Heart left ventricle (tissue), 16 donors: ENCODE measurements at regions of chr2 and their contacts with region 1.

Region 1: GRCh38 chr2:171160119-171160955 is at the start of gene TLK1:
- DNase-seq: peak; percentile 62 to 86 (median 71)
- ATAC-seq: peak; percentile 21 to 86 (median 68)
- H3K4me3 ChIP-seq: peak within 1 kb of the TSS; percentile 66 to 89 (median 81)
- H3K27ac ChIP-seq: peak within 1 kb of the TSS; percentile 83 to 96 (median 94)
- H3K4me1 ChIP-seq: peaks cover 0 to 59% (median 15%) of the 10 kb centered on the region in 12 donors
- H3K27me3 ChIP-seq: no peaks in the 10 kb centered on the region
- CTCF ChIP-seq: no peak
- POLR2A ChIP-seq: peak in 1 of 2 donors; percentile 24
- total RNA-seq, gene TLK1: 12.1 to 41.4 (median 28.6) TPM

Region 2: GRCh38 chr2:170770606-170771420 is 389.5 kb before region 1 on chr2:
- intact Hi-C with region 1: no loop called
- DNase-seq: peak; percentile 67 to 90 (median 78)
- ATAC-seq: peak; percentile 90 to 98 (median 96)
- H3K4me3 ChIP-seq: peak overlapping the region; percentile 43 to 91 (median 66)
- H3K27ac ChIP-seq: peak overlapping the region in 8 of 12 donors; percentile 16 to 77 (median 60)
- H3K4me1 ChIP-seq: peaks cover 0 to 15% (median 10%) of the 10 kb centered on the region in 12 donors
- H3K27me3 ChIP-seq: peaks cover 0 to 17% (median 0%) of the 10 kb centered on the region in 9 donors
- CTCF ChIP-seq: no peak
- POLR2A ChIP-seq: no peak

Region 3: GRCh38 chr2:170928824-170929685 is 231.3 kb before region 1 on chr2 and contains the start of gene GORASP2:
- intact Hi-C with region 1: loop called in 1 of 10 experiments (anchors 2 kb)
- DNase-seq: peak; percentile 98 to 99 (median 99)
- ATAC-seq: peak; percentile 96 to 99 (median 98)
- H3K4me3 ChIP-seq: peak within 1 kb of the TSS; percentile 73 to 97 (median 91)
- H3K27ac ChIP-seq: peak within 1 kb of the TSS; percentile 82 to 97 (median 94)
- H3K4me1 ChIP-seq: peaks cover 0 to 46% (median 32%) of the 10 kb centered on the region in 12 donors
- H3K27me3 ChIP-seq: no peaks in the 10 kb centered on the region
- CTCF ChIP-seq: peak in 10 of 12 donors; percentile 95 to 100 (median 98)
- POLR2A ChIP-seq: peak; percentile 32 to 80
- total RNA-seq, gene GORASP2: 47.5 to 76.1 (median 62.6) TPM

Region 4: GRCh38 chr2:170973492-170974303 is 186.6 kb before region 1 on chr2:
- intact Hi-C with region 1: loop called (anchors 2 to 5 kb)
- DNase-seq: peak; percentile 82 to 91 (median 86)
- ATAC-seq: peak; percentile 79 to 96 (median 94)
- H3K4me3 ChIP-seq: peak overlapping the region; percentile 48 to 96 (median 73)
- H3K27ac ChIP-seq: peak overlapping the region; percentile 56 to 89 (median 79)
- H3K4me1 ChIP-seq: peaks cover 0 to 16% (median 6%) of the 10 kb centered on the region in 12 donors
- H3K27me3 ChIP-seq: no peaks in the 10 kb centered on the region
- CTCF ChIP-seq: peak; percentile 67 to 99 (median 96)
- POLR2A ChIP-seq: peak in 1 of 2 donors; percentile 24

Region 5: GRCh38 chr2:171086352-171087290 is 73.7 kb before region 1 on chr2:
- intact Hi-C with region 1: loop called in 1 of 10 experiments (anchors 5 kb)
- DNase-seq: peak in 2 of 5 donors; percentile 18 to 27
- ATAC-seq: no peak
- H3K4me3 ChIP-seq: peak overlapping the region in 2 of 12 donors; percentile 6 to 19
- H3K27ac ChIP-seq: no peak overlapping the region
- H3K4me1 ChIP-seq: peaks cover 0 to 21% (median 4%) of the 10 kb centered on the region in 12 donors
- H3K27me3 ChIP-seq: no peaks in the 10 kb centered on the region
- CTCF ChIP-seq: peak in 11 of 12 donors; percentile 26 to 65 (median 48)
- POLR2A ChIP-seq: no peak

Region 6: DNA sequence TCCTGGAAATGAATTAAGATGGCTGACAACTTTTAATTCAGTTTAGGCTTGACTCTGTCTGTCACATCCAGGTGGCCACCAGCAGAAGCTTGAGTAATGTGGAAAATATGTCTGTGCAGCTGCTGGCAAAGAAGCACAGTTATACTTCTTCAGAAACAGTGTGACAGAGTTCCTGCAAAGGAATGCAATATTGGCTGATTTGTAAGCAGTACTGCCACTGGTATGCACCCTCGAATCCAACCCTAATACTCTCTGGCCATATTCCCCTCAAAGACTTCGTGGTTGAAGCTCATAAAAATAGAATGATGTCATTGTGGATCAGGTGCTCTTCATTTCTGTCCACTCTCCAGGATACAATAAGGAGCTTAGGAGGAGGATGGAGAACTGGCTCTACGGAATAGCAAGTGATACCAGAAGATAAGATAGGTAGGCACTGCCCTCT is 187.3 kb after region 1 on chr2:
- intact Hi-C with region 1: loop called in 1 of 10 experiments (anchors 10 kb)
- DNase-seq: no peak
- ATAC-seq: peak; percentile 45 to 88 (median 64)
- H3K4me3 ChIP-seq: no peak overlapping the region
- H3K27ac ChIP-seq: peak overlapping the region in 11 of 12 donors; percentile 12 to 70 (median 54)
- H3K4me1 ChIP-seq: peaks cover 0 to 20% (median 16%) of the 10 kb centered on the region in 12 donors
- H3K27me3 ChIP-seq: no peaks in the 10 kb centered on the region
- CTCF ChIP-seq: no peak
- POLR2A ChIP-seq: no peak

Region 7: DNA sequence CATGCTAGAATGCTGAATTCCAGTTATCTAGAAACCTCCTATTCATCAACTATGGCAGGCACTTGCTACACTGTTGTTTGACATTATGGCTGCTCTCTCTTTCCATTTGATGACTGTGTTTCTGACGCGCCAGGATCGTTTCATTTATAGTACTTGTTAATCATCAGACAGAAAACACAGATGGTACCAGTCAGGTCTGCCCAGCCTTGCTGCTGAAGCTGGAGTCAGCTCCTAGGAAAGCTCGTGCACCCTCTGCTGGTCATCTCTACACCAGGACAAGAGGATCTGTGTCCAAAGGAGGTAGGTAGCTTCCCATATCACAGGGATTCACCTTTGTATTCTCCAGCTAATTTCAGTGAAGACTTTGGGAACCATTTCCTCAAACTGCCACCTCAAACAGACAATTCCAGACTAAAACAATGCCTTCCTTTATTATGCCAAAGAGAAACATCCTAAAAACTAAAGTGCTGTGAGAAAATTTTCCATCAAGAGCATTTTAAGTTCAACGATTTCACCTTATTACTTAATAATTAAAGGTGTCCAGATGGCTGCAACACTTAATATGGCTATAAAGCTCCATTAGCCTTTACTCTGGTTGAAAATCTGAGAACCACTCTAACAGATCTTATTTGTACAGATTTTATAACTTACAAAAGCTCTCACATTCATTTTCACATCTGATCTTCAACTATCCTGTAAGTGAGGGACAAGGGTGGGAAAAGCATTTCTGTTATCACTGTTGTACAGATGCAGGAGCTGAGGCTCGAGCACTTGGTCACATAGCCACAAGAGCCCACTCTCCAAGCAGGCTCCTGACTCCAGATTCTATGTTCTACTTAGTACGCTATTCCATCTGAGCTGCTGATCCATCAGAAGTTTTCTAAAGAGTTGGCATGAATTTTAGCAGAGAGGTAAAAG is 255.9 kb after region 1 on chr2:
- intact Hi-C with region 1: loop called in 7 of 10 experiments (anchors 5 to 10 kb)
- DNase-seq: peak; percentile 81 to 91 (median 85)
- ATAC-seq: peak; percentile 92 to 99 (median 98)
- H3K4me3 ChIP-seq: no peak overlapping the region
- H3K27ac ChIP-seq: peak overlapping the region in 2 of 12 donors; percentile 11 to 32
- H3K4me1 ChIP-seq: peaks cover 0 to 10% (median 1%) of the 10 kb centered on the region in 12 donors
- H3K27me3 ChIP-seq: no peaks in the 10 kb centered on the region
- CTCF ChIP-seq: peak; percentile 71 to 91 (median 82)
- POLR2A ChIP-seq: no peak

Region 8: DNA sequence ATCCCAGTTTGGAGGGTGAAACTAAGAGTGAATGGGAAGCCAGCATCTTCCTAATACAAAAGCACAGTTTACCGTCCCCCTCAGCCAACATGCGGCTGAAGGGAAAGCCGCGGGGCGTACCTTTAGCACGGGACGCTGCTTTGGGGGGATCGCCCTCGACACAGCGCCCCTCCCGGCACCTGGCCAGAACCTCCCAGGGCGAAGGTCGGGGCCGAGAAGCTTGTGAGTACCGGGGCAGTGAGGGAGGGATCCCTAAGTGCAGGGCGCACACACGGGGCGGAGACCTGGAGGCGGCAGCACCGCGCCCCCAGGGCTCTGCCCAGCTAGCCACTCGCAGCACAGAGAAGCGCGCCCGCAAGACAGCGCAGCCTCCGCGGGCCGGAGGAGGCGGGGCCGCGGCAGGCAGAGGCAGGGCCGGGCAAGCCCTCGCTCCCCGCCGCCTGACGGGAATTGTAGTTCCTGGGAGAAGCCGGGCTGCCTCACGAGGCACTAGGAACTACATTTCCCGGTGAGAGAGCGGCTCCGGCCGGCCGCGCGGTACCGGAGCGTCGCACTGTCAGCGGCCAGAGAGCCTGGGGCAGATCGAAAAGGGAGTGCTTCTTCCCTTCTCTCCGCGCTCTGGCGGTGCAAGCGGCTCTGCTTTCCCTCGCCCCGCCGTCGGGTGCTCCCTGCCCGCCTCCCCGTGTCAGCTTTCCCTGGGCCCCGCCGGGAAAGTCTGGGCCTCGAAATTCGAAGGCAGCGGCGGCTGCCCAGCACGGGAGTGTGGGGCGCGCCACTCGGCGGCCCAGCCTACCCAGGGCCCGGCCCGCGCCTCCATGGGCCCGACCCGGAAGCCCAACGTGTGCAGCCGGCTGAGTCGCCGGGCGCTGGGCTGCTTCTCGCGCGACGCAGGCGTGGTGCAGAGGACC is 273.7 kb after region 1 on chr2 and contains the starts of genes DCAF17 and METTL8:
- intact Hi-C with region 1: loop called in 4 of 10 experiments (anchors 5 to 10 kb)
- DNase-seq: peak; percentile 96 to 98 (median 97)
- ATAC-seq: peak; percentile 98 to 99 (median 99)
- H3K4me3 ChIP-seq: peak within 1 kb of the TSS; percentile 61 to 95 (median 84)
- H3K27ac ChIP-seq: peak within 1 kb of the TSS; percentile 82 to 100 (median 98)
- H3K4me1 ChIP-seq: peaks cover 3 to 18% (median 10%) of the 10 kb centered on the region in 12 donors
- H3K27me3 ChIP-seq: no peaks in the 10 kb centered on the region
- CTCF ChIP-seq: peak in 10 of 12 donors; percentile 4 to 66 (median 42)
- POLR2A ChIP-seq: peak in 1 of 2 donors; percentile 74
- total RNA-seq, gene DCAF17: 5.9 to 16.7 (median 8.4) TPM
- total RNA-seq, gene METTL8: 7.4 to 18.5 (median 11.2) TPM